Posterior vena cava (tissue), 2 donors: ENCODE measurements at regions of chr3 and their contacts with region 1.

Region 1: DNA sequence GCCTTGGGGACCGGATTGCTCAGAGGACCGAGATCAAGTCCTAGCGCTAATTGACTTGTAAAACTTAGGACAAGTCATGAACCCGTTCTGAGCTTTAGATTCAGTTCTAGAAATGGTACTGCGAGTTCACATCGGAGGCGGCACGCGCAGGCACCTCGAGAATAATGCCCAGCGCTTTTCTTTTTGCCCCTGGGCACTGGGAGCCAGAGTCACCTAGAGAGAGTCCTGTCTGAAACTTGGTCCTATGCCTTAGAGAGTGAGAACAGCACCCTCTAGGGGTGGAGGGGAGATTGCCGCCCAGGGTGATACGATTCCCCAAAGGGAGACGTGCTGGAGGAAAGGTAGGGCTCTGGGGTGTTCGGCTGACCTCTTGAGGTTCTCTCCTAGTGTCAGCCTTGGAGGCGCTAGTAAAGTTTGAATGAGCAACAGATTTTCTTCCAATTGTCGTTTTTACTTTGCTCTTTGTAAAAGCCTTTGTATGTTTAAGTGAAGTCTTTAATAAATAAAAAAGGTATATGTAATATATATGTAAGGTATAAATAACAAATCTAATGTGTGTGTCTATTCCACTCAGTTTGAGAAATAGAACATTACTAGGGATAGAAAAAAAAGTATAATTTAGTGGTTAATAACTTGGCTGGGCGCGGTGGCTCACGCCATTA is 826 bp downstream of the EEF1AKMT4 start:
- DNase-seq: peak; percentile 94

Region 2: DNA sequence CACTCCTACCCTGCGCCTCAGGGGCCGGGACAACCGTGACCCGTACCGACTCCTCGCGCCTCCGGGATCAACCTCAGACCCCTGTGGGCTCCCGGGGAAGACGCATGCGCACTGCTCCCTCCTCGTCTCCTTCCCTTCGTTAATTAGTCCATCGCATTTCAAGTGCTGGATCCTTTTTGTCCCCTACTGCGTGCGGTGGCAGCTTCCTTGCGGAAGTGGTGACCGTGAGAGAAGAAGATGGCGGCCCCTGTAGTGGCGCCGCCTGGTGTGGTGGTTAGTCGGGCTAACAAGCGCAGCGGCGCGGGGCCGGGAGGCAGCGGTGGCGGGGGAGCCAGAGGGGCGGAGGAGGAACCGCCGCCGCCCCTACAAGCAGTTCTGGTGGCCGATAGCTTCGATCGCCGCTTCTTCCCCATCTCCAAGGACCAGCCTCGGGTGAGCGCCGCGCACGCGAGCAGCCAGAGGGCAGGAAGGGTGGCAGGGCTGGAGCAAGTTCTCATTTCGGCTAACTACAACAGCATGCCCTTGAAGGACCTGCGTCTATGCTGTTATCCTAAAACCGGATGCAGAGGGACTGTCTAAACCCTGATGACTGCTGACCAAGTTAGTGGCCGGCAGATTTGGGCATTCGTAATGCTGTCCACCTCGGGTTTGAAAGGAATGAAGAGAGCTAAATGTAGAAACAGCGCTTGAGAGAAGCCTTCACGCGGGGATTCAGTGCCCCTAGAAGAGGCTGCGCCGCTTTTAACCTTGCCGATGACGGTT is 115.0 kb before region 1 on chr3 and contains the start of gene EIF2B5:
- intact Hi-C with region 1: loop called (anchors 10 kb)
- DNase-seq: peak; percentile 96
- total RNA-seq, gene EIF2B5: 23.3 to 26.4 TPM

Region 3: GRCh38 chr3:184145111-184145524 is 105.2 kb before region 1 on chr3:
- intact Hi-C with region 1: loop called in 1 of 2 experiments (anchors 10 kb)
- DNase-seq: no peak

Region 4: DNA sequence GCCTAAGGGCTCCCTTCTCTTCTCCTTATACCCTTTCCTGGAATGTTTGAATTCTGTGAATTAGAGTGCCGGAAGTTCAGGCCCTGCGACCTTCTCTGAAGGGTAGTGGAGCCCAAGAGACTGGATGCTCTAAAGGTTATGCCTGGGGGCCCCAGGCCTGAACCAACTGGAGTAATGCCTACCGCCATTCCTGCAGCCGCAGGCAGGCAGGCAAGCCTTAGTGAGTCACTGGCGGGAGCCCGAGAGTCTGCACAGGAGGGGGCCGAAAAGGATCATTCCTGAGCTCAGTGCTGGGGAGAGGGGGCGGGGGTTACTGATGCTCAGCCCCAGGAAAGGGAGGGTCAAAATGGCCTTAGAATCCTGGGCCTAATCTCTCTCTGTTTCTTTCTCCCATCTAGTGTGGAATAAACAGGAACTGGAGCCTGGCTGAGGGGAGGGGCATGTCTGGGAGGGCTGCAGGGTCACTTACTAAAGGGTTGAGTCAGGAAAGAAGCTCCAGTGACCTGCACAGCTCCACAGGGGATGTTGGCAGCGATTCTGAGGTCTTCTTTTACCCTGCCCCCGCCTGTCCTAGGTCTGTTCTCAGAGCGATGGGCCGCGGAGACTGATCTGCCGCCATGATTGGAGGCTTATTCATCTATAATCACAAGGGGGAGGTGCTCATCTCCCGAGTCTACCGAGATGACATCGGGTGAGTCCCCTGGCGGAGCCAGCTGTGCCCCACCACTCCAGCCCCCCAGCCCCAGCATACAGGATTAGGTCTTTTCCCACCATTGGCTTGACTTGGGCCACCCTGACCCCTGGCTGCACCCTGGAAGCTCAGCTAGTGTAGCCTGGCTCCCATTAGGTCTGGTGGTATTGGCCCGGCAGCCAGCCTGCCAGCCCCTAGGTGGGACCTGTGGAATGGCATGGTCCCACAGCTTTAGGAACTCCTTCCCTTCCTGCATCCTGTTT is 73.6 kb before region 1 on chr3:
- intact Hi-C with region 1: loop called in 1 of 2 experiments (anchors 2 kb)
- DNase-seq: peak; percentile 93

Region 5: GRCh38 chr3:184362668-184363540 is 112.6 kb after region 1 on chr3:
- intact Hi-C with region 1: no loop called
- DNase-seq: peak; percentile 99